BJ (cell line): ENCODE measurements at regions of chr1 and their contacts with region 1.

Region 1: GRCh38 chr1:117942293-117942692 is 12.8 kb downstream of the WDR3 start:
- DNase-seq: no peak
- H3K4me3 ChIP-seq: no peak overlapping the region
- H3K27me3 ChIP-seq: no peaks in the 10 kb centered on the region
- CTCF ChIP-seq: no peak

Region 2: DNA sequence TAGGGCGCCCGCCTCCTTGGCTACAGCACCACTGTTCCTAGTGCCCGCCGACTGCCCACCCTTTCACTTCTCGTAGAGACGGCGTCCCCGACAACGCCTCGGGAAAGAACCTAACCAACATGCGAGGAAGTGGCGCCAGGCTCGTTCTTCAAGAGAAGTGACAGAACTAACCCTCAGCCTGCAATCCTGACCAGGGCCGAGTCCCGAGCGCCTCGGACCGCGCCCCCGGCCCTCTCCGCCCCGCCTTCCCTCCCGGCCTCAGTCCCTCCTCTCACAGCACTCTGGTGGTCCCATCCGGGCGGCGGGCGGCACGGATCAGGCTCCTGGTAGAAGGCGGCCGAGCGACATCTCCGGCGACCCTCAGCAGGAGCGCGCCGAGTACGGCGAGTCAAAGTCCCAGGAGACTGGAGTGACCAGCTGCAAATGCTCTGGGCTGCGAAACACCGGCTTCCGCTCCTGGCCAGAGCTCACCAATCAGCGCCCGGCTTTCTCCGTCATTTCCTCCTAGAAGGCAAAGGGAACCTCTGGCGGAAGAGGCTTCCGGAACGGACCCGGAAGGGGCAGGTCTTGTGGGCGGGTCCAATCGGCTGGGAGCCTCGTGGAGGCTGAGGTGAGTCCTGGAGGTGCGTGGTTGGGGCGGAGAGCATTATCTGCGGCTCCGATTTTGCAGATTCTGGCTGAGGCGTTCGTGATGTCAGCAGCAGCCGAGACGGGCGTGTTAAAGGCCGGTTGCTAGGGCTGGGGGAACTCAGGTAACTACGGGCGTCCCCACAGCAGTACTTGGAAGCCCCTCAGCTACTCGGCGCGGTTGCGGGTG is 12.9 kb before region 1 on chr1 and contains the starts of genes GDAP2 and WDR3:
- CTCF ChIA-PET with region 1: no interaction called
- POLR2A ChIA-PET with region 1: no interaction called
- DNase-seq: peak; percentile 80
- H3K4me3 ChIP-seq: peak within 1 kb of the TSS; percentile 65
- H3K27me3 ChIP-seq: no peaks in the 10 kb centered on the region
- CTCF ChIP-seq: no peak
- polyA plus RNA-seq, gene GDAP2: 8.1 and 19.2 TPM in 2 replicates
- polyA plus RNA-seq, gene WDR3: 13.2 and 21.9 TPM in 2 replicates

Region 3: GRCh38 chr1:117964290-117965038 is 22.2 kb after region 1 on chr1:
- CTCF ChIA-PET with region 1: no interaction called
- POLR2A ChIA-PET with region 1: interaction called, 16 read pairs
- DNase-seq: no peak
- H3K4me3 ChIP-seq: no peak overlapping the region
- H3K27me3 ChIP-seq: no peaks in the 10 kb centered on the region
- CTCF ChIP-seq: no peak

Region 4: GRCh38 chr1:118209625-118210024 is 267.3 kb after region 1 on chr1:
- CTCF ChIA-PET with region 1: no interaction called
- POLR2A ChIA-PET with region 1: no interaction called
- DNase-seq: no peak
- H3K4me3 ChIP-seq: no peak overlapping the region
- H3K27me3 ChIP-seq: no peaks in the 10 kb centered on the region; the same call in 1 of the 2 replicates
- CTCF ChIP-seq: no peak